Prostate gland (tissue), 2 donors: ENCODE measurements at regions of chr6 and their contacts with region 1.

Region 1: DNA sequence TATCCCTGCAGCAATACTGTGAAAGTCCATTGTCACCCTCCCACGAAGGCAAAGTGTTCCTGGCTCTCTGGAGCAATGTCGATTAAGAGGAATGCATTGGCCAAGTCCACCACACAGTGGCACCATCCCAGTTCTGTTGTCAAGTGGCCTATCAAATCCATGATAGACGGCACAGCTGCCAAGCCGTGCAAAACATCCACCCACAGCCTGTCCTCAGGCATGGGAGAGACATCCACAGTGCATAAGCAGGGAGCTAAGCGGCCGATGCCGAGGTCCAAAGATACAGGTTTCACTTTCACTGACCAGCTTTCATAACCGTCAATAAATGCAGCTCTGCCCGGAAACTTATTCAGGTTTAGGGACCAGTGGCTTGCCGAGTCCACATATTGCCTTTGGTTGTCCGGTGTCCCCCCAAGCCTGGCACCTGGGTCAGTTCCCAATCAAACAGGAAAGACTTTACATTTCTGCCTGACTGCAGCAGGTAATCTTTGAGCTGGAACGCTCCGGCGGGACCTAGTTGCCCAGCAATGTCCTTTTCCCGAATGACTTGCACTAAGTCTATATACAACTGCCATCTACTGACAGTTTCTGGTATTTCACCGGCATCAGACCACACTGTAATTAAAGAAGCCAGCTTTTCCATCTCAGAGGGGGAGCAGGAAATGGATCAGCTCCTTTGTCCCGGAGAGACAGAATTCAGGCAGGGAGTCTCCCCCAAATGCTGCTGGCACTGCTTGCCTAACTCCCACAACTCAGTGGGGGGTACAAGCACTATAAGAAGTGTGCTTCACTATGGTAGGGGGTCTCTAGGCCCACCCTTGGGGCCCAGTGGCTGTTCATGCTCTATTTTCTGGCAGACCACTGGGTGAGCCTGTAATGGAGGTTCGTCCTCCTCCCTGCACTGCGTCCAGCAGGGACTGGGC is 6.3 kb downstream of the ZKSCAN3 start:
- DNase-seq: peak; percentile 91
- H3K4me3 ChIP-seq: peak overlapping the region; percentile 41 to 46
- H3K27ac ChIP-seq: peak overlapping the region; percentile 85 to 87
- H3K4me1 ChIP-seq: peaks cover 4% of the 10 kb centered on the region
- H3K27me3 ChIP-seq: no peaks in the 10 kb centered on the region
- CTCF ChIP-seq: peak; percentile 77 to 91 (median 88)
- POLR2A ChIP-seq: no peak

Region 2: DNA sequence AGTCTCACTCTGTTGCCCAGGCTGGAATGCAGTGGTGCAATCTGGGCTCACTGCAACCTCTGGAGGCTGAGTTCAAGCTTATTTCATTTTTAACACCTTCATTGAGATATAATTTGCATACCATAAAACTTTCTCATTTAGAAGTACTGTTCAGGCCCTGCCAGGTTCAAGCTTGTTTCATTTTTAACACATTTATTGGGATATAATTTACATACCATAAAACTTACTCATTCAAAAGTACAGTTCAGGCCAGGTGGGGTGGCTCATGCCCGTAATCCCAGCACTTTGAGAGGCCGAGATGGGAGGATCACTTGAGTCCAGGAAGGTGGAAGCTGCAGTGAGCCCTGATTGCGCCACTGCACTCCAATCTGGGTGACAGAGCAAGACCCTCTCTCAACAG is 393.5 kb before region 1 on chr6:
- intact Hi-C with region 1: no loop called
- DNase-seq: no peak
- H3K4me3 ChIP-seq: no peak overlapping the region
- H3K27ac ChIP-seq: no peak overlapping the region
- H3K4me1 ChIP-seq: no peaks in the 10 kb centered on the region
- H3K27me3 ChIP-seq: no peaks in the 10 kb centered on the region
- CTCF ChIP-seq: no peak
- POLR2A ChIP-seq: no peak

Region 3: DNA sequence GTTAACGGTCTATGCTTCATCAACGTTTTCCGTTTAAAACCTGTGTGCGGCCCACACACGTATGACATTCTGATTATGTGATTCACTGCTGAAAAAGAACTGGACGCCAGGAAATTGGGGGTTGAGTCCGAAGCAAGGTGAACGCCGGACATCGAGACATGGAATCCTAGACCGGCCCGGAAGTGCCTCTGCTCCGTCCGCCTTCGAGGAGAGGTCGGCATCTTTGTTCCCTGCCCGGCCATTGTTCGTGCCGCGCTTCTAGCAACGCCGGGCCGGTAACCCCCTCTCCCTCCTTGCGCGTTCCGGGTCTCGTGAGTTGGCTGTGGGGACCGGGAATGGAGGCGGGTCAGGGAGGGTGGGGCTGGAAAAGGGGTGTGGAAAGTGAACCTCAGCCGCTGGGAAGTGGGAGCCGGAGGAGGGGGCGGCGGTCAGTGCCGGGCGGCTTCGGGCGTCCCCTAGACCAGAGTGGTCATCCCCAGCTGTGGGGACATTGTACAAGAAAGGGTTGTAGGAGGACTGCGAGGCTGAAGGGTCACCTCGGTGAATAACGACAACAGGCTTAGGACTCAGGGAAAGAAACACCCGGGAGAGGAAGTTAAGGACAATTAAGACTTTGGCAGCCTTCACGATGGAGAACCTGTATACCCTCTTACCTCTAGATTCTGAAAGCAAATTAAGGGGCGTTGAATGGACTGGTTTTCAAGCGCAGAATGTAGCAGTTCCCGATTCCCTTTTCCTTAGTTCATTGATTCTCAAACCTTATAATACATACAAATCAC is 130.8 kb before region 1 on chr6 and contains the start of gene ZSCAN9:
- intact Hi-C with region 1: loop called (anchors 10 kb)
- DNase-seq: peak; percentile 78
- H3K4me3 ChIP-seq: peak within 1 kb of the TSS; percentile 67 to 77
- H3K27ac ChIP-seq: peak within 1 kb of the TSS; percentile 78 to 81
- H3K4me1 ChIP-seq: no peaks in the 10 kb centered on the region
- H3K27me3 ChIP-seq: no peaks in the 10 kb centered on the region
- CTCF ChIP-seq: no peak
- POLR2A ChIP-seq: no peak
- total RNA-seq, gene ZSCAN9: 16.7 to 17.3 TPM